Ovary (tissue), 10 donors: ENCODE measurements at regions of chr16 and their contacts with region 1.

Region 1: DNA sequence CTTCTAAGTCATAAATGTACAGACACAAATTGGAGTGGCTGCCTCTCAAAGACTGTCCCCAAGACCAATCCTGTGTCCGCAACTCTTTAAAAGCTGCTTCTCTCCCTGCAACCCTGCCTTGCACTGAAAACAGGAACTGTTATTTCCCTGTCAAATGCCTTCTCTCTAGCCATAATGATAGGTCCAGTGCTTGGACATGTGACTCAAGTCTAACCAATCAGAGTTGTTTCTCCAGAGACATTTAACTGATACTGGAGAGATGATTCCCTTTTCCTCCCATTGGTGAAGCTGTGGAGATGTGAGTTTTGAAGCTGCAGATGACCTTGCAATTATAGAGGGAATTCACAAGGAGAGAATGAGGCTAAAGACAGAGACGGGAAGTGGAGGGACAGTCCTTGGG is 253.3 kb upstream of the CDH5 start:
- DNase-seq: no peak
- H3K4me3 ChIP-seq: no peak overlapping the region
- H3K27ac ChIP-seq: no peak overlapping the region
- H3K4me1 ChIP-seq: no peaks in the 10 kb centered on the region
- H3K27me3 ChIP-seq: no peaks in the 10 kb centered on the region
- CTCF ChIP-seq: no peak
- EP300 ChIP-seq: no peak
- POLR2A ChIP-seq: no peak

Region 2: DNA sequence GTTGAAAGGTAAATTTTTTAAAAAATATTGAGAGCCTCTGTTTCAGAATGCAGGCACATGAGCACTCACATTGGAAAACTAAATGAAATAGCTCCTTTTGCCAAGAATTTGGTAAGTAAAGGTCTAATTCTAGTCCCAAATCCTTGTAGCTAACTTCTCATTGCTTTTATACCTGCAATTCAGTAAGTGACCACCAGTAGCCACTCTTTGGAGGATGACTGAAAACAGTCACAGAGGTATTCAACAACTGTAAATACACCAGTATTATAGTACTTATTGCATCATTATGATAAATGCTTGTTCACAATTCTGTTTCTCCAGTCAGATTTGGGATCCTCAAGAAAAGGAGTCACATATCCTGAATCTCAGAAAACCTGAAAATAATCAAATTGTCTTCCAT is 429.0 kb before region 1 on chr16:
- intact Hi-C with region 1: loop called in 1 of 4 experiments (anchors 5 kb)
- DNase-seq: no peak
- H3K4me3 ChIP-seq: no peak overlapping the region
- H3K27ac ChIP-seq: no peak overlapping the region
- H3K4me1 ChIP-seq: peaks cover 3% of the 10 kb centered on the region
- H3K27me3 ChIP-seq: no peaks in the 10 kb centered on the region
- CTCF ChIP-seq: no peak
- EP300 ChIP-seq: no peak
- POLR2A ChIP-seq: no peak

Region 3: DNA sequence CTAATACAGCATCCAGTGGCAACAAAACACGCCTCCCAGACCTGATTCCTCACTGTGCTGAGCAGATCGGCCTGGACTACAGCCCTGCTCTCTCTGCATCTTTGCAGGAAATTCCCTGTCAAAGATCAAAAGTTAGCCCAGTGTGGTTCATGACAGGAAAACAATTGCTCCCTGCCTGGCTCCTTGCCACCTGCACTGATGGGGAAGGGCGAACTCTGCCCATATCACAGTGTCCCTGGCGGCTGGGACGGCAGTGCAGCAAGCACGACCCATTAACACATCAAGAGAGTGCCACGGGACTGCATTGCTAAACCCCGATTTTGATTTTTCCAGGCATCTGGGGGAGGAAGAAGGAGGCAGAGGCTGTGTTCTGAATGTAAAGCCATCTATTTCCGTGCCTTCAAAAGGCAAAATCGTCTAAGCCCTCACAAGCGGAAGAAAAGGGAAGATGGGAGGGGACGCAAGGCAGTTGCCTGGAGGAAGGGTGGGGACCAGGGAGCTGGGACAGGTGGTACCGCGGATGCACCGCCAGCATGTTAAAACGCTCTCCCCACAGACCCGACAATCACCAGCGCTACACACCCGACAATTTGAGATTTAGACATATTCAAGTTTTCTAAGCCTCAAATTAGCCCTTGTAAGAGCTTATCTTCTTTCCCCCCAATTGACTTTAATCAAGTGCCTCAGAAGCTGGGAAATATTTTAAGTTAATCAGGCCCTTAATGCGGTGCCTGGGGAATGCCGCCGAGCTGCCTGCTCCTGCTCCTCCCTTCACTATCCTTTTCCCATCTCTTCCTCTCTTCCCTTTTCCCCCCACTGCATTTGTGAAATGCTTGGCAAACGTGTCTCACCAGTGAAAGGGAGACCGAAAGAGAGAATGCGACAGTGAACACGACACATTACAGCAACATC is 14.5 kb after region 1 on chr16:
- intact Hi-C with region 1: no loop called
- DNase-seq: peak in 1 of 5 donors; percentile 44
- H3K4me3 ChIP-seq: no peak overlapping the region
- H3K27ac ChIP-seq: no peak overlapping the region
- H3K4me1 ChIP-seq: peaks cover 5% of the 10 kb centered on the region
- H3K27me3 ChIP-seq: no peaks in the 10 kb centered on the region
- CTCF ChIP-seq: no peak
- EP300 ChIP-seq: no peak
- POLR2A ChIP-seq: no peak